ENCODE measurements at regions of chr13 and their contacts with region 1.

Region 1: DNA sequence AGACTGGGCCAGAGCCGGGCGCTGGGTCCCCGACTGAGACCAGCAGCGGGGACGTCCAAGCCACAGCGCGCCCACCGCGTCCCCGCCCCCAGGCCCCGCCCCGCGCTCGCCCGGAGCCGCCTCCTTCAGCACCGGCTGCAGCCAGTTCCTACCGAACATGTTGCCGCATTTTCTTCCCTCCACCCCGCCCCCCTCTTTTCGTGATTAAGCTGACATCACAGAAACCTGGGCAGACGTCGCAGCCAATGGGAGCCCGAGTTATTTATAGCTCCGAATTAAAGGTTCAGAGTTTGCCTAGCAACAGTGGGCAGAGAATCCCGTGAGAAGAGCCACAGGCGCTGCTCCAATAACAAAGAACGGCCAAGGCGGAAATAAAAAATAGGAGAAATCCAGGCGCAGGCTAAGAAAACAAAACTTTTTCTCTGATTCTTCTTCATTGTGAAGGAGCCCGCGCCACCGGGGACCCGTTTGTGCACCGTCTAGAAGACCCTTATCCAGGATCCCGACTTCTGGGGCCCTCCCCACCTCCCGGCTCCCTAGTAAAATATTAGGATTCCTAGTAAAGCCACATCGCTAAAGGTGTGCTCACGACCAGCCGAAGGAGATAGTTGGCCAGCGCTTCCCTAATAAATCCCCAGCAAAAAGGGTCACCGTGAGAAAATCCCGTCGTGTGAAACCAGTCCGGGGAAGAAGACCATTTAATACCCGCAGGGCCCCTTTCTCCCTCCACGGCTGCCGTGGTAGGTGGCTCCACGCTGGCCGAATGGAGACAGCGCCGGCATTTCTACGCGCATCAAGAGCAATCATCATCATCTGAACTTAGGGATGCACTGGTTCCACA is 61.7 kb downstream of the SERP2 start:
- DNase-seq: peak; percentile 77 to 96 (median 82)
- H3K4me3 ChIP-seq: peak overlapping the region; percentile 54 to 63
- H3K4me3 Mint-ChIP-seq: peak overlapping the region; percentile 87 to 93 (median 90)
- H3K27ac ChIP-seq: peak overlapping the region; percentile 23
- H3K27ac Mint-ChIP-seq: peak overlapping the region; percentile 44 to 92 (median 89)
- H3K4me1 ChIP-seq: peaks cover 30% of the 10 kb centered on the region
- H3K4me1 Mint-ChIP-seq: peaks cover 15 to 35% (median 22%) of the 10 kb centered on the region in 4 donors
- H3K27me3 ChIP-seq: peaks cover 14% of the 10 kb centered on the region
- H3K27me3 Mint-ChIP-seq: peaks cover 6 to 9% of the 10 kb centered on the region in 2 donors

Region 2: GRCh38 chr13:44050450-44051063 is 384.8 kb before region 1 on chr13:
- CTCF ChIA-PET with region 1: interaction called, 21 read pairs
- POLR2A ChIA-PET with region 1: no interaction called
- intact Hi-C with region 1: loop called (anchors 1 kb)
- DNase-seq: peak in 4 of 5 donors; percentile 21 to 36 (median 32)
- H3K4me3 ChIP-seq: no peak overlapping the region
- H3K4me3 Mint-ChIP-seq: no peak overlapping the region
- H3K27ac ChIP-seq: no peak overlapping the region
- H3K27ac Mint-ChIP-seq: no peak overlapping the region
- H3K4me1 ChIP-seq: no peaks in the 10 kb centered on the region
- H3K4me1 Mint-ChIP-seq: peaks cover 0 to 4% (median 3%) of the 10 kb centered on the region in 4 donors
- H3K27me3 ChIP-seq: peaks cover 5% of the 10 kb centered on the region
- H3K27me3 Mint-ChIP-seq: peaks cover 20 to 36% of the 10 kb centered on the region in 2 donors

Region 3: DNA sequence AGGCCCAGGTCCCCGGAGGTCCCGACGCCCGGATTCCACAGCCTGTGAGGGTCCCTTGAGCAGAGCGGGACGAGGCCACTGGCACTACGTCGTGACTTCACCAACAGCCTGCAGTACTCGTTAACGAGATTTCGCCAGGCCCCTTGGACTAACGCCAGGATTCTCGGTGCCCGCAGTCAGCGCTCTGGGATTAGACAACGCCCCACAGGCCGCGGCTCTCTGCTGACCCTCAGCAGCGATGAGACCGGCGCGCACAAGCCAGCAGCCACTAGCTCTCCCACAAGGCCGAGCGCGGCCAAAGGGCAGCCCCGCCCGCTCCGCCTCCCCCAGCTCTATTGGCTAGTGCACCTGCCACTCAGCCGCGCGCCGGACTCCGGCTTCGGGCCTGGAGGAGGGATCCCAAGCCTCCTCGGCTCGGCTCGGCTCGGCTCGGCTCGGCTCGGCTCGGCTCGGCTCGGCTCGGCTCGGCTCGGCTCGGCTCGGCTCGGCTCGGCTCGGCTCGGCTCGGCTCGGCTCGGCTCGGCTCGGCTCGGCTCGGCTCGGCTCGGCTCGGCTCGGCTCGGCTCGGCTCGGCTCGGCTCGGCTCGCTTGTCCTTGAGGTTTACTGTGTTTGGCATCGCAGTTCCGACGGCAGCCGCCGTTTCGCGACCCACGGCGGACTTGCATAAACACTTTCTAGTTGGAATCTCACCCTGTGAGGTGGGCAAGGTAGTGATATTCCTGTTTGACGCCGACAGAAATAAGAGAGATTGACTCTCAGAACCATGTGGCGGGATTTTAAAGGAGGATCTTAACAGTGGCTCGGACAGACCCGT is 293.4 kb before region 1 on chr13:
- CTCF ChIA-PET with region 1: no interaction called
- POLR2A ChIA-PET with region 1: interaction called, 6 read pairs
- intact Hi-C with region 1: loop called (anchors 1 kb)
- DNase-seq: peak; percentile 87 to 94 (median 89)
- H3K4me3 ChIP-seq: peak overlapping the region; percentile 59 to 79
- H3K4me3 Mint-ChIP-seq: peak overlapping the region; percentile 90 to 98 (median 94)
- H3K27ac ChIP-seq: peak overlapping the region; percentile 83
- H3K27ac Mint-ChIP-seq: peak overlapping the region; percentile 76 to 97 (median 96)
- H3K4me1 ChIP-seq: peaks cover 14% of the 10 kb centered on the region
- H3K4me1 Mint-ChIP-seq: peaks cover 9 to 16% (median 13%) of the 10 kb centered on the region in 4 donors
- H3K27me3 ChIP-seq: no peaks in the 10 kb centered on the region
- H3K27me3 Mint-ChIP-seq: peaks cover 5 to 7% of the 10 kb centered on the region in 2 donors

Region 4: GRCh38 chr13:44191504-44192171 is 243.7 kb before region 1 on chr13:
- CTCF ChIA-PET with region 1: interaction called, 46 read pairs
- POLR2A ChIA-PET with region 1: interaction called, 3 read pairs
- intact Hi-C with region 1: loop called (anchors 1 kb)
- DNase-seq: peak; percentile 55 to 69 (median 63)
- H3K4me3 ChIP-seq: peak overlapping the region in 1 of 2 donors; percentile 25
- H3K4me3 Mint-ChIP-seq: peak overlapping the region; percentile 4 to 68 (median 61)
- H3K27ac ChIP-seq: no peak overlapping the region
- H3K27ac Mint-ChIP-seq: peak overlapping the region; percentile 73 to 90 (median 78)
- H3K4me1 ChIP-seq: peaks cover 12% of the 10 kb centered on the region
- H3K4me1 Mint-ChIP-seq: peaks cover 18 to 30% (median 25%) of the 10 kb centered on the region in 4 donors
- H3K27me3 ChIP-seq: no peaks in the 10 kb centered on the region
- H3K27me3 Mint-ChIP-seq: peaks cover 0 to 2% of the 10 kb centered on the region in 2 donors

Region 5: DNA sequence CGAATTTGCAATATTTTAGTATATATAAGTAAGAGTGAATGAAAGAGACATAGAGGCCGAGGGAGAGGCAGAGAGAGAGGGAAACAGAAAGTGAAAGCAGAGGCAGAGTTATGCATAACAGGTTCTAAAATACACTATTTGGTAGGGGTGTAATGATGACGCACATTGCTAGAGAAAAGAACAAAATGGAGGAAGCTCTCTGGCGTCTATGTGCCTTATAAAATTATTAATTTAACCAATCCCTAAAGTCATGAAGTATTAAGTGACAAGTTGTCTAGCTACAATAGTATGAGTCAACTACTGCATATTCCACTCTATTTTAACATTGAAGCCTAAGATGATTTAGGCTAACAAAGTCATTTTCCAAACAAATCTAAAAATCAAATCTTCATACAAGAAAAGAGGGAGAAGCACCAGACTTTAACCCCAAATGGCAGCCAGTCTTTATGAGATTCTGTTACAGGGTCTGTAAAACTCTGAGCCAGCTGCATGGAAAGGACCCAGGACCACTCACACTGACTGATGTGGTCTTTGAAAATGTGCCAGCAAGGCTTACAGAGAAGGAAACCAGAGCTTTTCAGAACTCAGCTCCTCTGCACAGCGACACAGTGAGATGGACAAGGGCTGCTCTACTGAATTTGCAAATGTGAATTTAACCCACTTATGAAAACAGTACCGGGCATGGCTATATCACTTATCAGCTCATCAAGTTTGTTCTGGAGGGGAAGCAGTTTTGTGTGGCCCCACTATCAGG is 160.7 kb before region 1 on chr13:
- CTCF ChIA-PET with region 1: interaction called, 3 read pairs
- POLR2A ChIA-PET with region 1: interaction called, 13 read pairs
- intact Hi-C with region 1: loop called (anchors 2 kb)
- DNase-seq: peak; percentile 73 to 83 (median 78)
- H3K4me3 ChIP-seq: peak overlapping the region; percentile 48
- H3K4me3 Mint-ChIP-seq: peak overlapping the region; percentile 61 to 89 (median 77)
- H3K27ac ChIP-seq: peak overlapping the region; percentile 45
- H3K27ac Mint-ChIP-seq: peak overlapping the region; percentile 80 to 98 (median 94)
- H3K4me1 ChIP-seq: peaks cover 24% of the 10 kb centered on the region
- H3K4me1 Mint-ChIP-seq: peaks cover 24 to 40% (median 27%) of the 10 kb centered on the region in 4 donors
- H3K27me3 ChIP-seq: no peaks in the 10 kb centered on the region
- H3K27me3 Mint-ChIP-seq: peaks cover 5 to 6% of the 10 kb centered on the region in 2 donors

Region 6: GRCh38 chr13:44470638-44471562 is 35.5 kb after region 1 on chr13:
- CTCF ChIA-PET with region 1: interaction called, 3 read pairs
- POLR2A ChIA-PET with region 1: no interaction called
- intact Hi-C with region 1: loop called (anchors 2 kb)
- DNase-seq: peak in 2 of 5 donors; percentile 16 to 20
- H3K4me3 ChIP-seq: no peak overlapping the region
- H3K4me3 Mint-ChIP-seq: no peak overlapping the region
- H3K27ac ChIP-seq: no peak overlapping the region
- H3K27ac Mint-ChIP-seq: no peak overlapping the region
- H3K4me1 ChIP-seq: no peaks in the 10 kb centered on the region
- H3K4me1 Mint-ChIP-seq: peaks cover 0 to 4% (median 0%) of the 10 kb centered on the region in 4 donors
- H3K27me3 ChIP-seq: no peaks in the 10 kb centered on the region
- H3K27me3 Mint-ChIP-seq: no peaks in the 10 kb centered on the region

Region 7: DNA sequence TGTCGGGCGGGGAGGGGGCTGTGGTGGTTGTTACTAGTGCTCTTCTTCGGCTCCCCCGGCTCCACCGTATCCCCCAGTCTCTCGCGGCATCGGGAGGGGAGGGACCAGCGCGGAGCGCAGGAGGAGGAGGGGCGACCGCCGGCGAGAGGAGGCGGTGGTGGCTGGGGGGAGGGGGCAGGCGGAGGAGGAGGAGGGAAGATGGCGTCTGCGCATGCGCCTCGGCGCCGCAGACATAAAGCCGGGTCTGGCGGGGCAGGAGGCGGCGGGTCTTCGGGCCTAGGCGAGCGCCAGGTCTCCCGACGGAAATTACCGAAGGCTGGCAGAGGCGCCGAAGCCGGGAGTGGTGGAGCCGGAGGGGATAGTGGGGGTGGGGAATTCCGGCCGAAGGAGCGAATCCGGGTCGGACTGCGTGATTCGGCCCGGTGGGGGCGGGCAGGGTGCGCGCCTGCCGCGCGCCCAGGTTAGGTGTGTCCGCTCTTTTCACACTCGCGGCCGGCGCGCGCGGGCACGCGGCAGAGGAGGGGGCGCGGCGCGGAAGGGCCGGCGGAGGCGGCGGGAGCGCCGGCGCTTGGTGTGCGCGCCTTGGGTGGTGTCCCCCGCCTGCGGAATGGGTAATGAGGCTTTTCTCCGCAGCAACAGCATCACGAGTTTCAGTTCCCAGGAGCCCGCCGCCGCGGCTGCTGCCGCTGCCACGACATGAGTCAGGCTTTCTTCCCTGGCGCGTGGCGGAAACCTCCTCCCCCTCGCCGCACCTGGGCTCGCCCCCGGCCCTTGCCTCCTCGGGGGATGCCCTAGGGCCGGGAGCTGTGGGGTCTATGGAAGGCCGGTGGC is 142.1 kb after region 1 on chr13:
- CTCF ChIA-PET with region 1: no interaction called
- POLR2A ChIA-PET with region 1: no interaction called
- intact Hi-C with region 1: loop called (anchors 2 kb)
- DNase-seq: peak; percentile 93 to 96 (median 94)
- H3K4me3 ChIP-seq: peak overlapping the region; percentile 47 to 86
- H3K4me3 Mint-ChIP-seq: peak overlapping the region; percentile 88 to 97 (median 94)
- H3K27ac ChIP-seq: peak overlapping the region; percentile 84
- H3K27ac Mint-ChIP-seq: peak overlapping the region; percentile 91 to 97 (median 95)
- H3K4me1 ChIP-seq: peaks cover 39% of the 10 kb centered on the region
- H3K4me1 Mint-ChIP-seq: peaks cover 28 to 46% (median 38%) of the 10 kb centered on the region in 4 donors
- H3K27me3 ChIP-seq: no peaks in the 10 kb centered on the region
- H3K27me3 Mint-ChIP-seq: no peaks in the 10 kb centered on the region

Region 8: DNA sequence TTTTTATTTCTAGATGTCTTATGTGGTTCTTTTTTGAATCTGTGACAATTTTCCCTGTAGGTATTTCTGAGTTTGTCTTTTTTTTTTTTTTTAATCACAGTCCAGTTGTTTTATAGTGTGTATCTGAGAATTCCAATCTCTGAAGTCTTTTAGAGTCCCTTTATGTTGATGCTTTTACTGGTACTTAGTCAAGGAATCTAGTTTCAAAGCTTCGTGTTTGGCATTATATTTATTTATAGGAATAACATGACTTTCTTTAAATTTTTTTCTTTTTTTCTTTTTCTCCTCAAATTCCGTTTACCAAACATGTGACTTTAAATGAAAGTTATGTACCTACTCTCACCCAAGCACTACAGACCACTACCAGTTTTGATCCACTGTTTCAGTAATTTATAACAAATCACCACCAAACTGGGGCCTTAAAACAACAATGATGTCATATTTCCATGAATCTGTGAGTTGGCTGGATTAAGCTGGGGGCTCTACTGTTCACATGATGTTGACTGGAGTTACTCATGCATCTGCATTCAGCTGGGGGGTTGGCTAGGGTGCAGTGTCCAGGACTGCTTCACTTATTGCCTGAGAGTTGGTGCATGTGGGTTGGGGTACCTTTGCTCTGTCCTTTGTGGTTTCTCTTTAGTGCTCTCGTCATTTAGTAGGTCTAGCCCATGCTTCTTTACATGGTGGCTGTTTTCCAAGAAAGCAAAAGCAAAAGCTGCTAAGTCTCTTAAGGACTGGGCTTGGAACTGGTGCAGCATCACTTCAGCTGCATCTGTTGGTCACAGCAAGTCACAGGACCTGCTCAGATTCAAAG is 743.2 kb after region 1 on chr13:
- CTCF ChIA-PET with region 1: no interaction called
- POLR2A ChIA-PET with region 1: no interaction called
- intact Hi-C with region 1: no loop called
- DNase-seq: no peak
- H3K4me3 ChIP-seq: no peak overlapping the region
- H3K4me3 Mint-ChIP-seq: no peak overlapping the region
- H3K27ac ChIP-seq: no peak overlapping the region
- H3K27ac Mint-ChIP-seq: peak overlapping the region in 2 of 7 donors; percentile 45 to 68
- H3K4me1 ChIP-seq: peaks cover 4% of the 10 kb centered on the region
- H3K4me1 Mint-ChIP-seq: peaks cover 14 to 45% (median 22%) of the 10 kb centered on the region in 4 donors
- H3K27me3 ChIP-seq: no peaks in the 10 kb centered on the region
- H3K27me3 Mint-ChIP-seq: no peaks in the 10 kb centered on the region